ENCODE measurements at regions of chr15 and their contacts with region 1.

Region 1: DNA sequence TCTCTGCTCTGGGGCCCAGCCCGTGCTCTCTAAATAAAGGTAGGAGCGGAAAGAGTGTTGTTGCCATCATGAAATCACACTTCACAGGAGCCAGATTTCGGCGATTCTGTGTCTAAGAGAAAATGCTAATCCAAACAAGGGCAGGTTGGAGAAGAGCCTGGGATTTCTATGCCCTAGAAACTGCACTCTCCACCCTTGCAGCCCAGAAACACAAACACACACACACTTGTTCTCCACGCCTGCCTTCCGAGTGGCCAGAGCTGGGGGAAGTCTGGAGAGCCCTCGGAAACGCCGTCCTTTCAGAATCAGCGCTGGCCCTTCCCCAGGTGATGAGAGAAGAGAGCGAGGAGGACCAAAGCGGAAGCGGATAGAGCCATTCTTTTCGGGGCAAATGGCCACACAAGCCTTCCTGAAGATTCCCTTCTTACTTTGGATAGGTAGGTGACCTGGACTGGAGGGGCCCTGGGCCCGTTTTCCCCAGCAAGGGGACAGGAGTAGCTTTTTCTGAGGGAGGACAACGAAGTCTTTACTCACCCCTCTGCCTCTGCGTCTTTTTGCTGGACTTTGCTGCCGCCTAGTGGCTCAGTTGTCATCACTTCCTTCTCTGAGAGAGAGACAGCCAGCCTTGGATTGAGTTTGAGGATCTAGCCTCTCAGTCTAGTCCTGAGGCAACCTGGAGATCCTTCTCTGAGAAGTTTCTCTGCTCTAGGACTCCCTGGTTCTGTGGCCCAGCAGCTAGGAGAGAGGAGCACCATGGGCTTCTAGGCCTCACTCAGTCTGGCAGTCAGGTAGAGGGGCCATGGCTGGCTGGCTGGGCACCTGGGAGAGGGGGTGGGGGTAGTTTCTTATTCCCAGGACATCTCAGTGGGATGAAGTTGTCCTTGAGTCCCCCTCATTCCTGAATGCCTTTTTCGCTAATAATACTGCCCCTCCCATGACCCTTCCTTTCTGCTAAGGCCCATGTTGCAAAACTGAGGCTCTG is 37.7 kb downstream of the SENP8 start:
- DNase-seq: peak; percentile 67
- H3K4me3 Mint-ChIP-seq: peak overlapping the region; percentile 73
- H3K27ac Mint-ChIP-seq: no peak overlapping the region
- H3K4me1 Mint-ChIP-seq: peaks cover 6% of the 10 kb centered on the region
- H3K27me3 Mint-ChIP-seq: peaks cover 4% of the 10 kb centered on the region

Region 2: GRCh38 chr15:71448688-71449114 is 707.2 kb before region 1 on chr15:
- intact Hi-C with region 1: loop called (anchors 5 kb)
- DNase-seq: no peak
- H3K4me3 Mint-ChIP-seq: no peak overlapping the region
- H3K27ac Mint-ChIP-seq: no peak overlapping the region
- H3K4me1 Mint-ChIP-seq: no peaks in the 10 kb centered on the region
- H3K27me3 Mint-ChIP-seq: peaks cover 2% of the 10 kb centered on the region

Region 3: GRCh38 chr15:71743861-71744382 is 412.0 kb before region 1 on chr15:
- intact Hi-C with region 1: loop called (anchors 1 kb)
- DNase-seq: peak; percentile 11
- H3K4me3 Mint-ChIP-seq: no peak overlapping the region
- H3K27ac Mint-ChIP-seq: no peak overlapping the region
- H3K4me1 Mint-ChIP-seq: no peaks in the 10 kb centered on the region
- H3K27me3 Mint-ChIP-seq: peaks cover 5% of the 10 kb centered on the region

Region 4: DNA sequence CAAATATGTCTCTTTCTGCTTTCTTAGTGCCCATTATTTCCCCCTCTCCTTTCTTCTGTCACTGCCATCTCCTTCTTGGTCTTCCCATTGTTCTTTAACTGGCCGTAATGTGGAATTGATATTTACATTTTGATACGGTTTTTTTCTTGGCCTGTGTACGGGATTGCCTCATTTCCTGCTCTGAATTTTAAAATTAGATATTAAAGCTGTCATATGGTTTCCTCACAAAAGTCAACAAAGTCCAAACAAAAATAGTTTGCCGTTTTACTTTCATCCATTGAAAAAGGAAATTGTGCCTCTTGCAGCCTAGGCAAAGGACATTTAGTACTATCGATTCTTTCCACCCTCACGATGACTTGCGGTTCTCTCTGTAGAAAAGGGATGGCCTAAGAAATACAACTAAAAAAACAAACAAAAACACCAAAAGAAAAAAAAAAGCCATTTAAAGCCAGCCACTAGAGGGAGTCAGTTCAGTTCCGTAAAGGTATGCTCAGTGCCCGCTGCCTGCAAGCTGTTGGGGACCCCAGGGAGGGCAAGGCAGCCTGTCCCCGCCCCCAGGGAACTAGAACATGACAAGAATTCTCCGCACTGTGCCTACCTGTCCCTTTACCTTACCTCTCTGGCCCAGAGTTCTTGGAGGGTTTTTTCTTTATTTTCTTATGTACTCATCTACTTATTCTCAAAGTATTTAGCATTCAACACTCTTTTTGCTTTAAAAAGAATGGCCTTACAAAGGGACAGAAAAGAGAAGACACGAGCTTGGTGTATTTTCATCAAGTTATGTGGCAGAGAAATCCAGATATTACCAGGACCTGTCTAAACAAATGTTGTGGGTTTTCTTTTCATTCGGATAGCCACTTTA is 375.6 kb before region 1 on chr15:
- intact Hi-C with region 1: loop called (anchors 1 kb)
- DNase-seq: peak; percentile 9
- H3K4me3 Mint-ChIP-seq: no peak overlapping the region
- H3K27ac Mint-ChIP-seq: peak overlapping the region; percentile 10
- H3K4me1 Mint-ChIP-seq: peaks cover 21% of the 10 kb centered on the region
- H3K27me3 Mint-ChIP-seq: peaks cover 5% of the 10 kb centered on the region

Region 5: DNA sequence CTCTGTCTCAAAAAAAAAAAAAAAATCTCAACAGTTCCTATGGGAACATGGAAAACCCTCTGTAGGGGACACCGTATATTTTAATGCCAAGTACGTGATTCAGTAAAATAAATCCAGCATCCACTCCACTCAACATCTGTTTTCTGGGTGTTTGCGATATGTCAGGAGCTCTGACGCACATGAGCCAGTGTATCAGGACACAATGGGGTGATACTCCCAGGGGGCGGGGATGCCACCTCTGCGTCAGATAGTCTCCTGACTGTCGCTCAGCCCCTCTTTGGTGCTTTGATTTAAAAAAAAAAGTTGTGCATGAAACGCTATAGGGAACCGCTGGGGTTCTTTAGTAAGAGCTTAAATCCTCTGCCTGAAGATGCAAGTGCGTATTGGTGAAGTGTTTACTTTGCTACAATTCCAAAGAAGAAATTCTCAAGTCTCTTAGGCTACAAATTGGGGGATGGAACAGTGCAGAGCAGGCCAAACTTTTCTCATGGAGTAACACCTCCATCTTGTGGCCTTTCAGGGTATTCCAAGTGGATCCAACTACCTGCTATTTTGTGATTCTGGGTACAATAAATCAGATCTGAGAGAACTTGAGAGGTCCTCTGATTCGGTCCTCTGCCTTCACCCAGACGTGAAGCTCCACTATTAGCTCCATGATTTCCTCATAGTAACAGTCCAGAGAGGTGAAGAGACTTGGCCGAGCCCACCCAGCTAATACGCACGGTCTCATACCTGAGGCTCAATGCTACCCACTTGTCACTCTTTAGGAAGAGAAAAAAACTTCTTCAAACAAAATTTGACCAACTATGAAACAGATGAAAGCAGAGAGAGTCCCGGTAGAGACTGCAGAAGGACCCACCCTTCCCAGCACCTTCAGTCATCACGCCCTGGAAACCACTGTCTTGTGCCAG is 354.8 kb before region 1 on chr15:
- intact Hi-C with region 1: loop called (anchors 1 kb)
- DNase-seq: no peak
- H3K4me3 Mint-ChIP-seq: no peak overlapping the region
- H3K27ac Mint-ChIP-seq: no peak overlapping the region
- H3K4me1 Mint-ChIP-seq: no peaks in the 10 kb centered on the region
- H3K27me3 Mint-ChIP-seq: no peaks in the 10 kb centered on the region